OCI-LY7 (cell line): ENCODE measurements at regions of chr14 and their contacts with region 1.

Region 1: GRCh38 chr14:30214461-30215090 is 286.9 kb upstream of the PRKD1 start:
- DNase-seq: peak; percentile 47
- H3K4me3 ChIP-seq: no peak overlapping the region
- H3K27ac ChIP-seq: no peak overlapping the region
- H3K4me1 ChIP-seq: no peaks in the 10 kb centered on the region
- CTCF ChIP-seq: peak; percentile 82

Region 2: GRCh38 chr14:28751467-28752058 is 1463.0 kb before region 1 on chr14:
- CTCF ChIA-PET with region 1: no interaction called
- POLR2A ChIA-PET with region 1: no interaction called
- intact Hi-C with region 1: loop called (anchors 5 kb)
- DNase-seq: peak; percentile 31
- H3K4me3 ChIP-seq: no peak overlapping the region
- H3K27ac ChIP-seq: no peak overlapping the region
- H3K4me1 ChIP-seq: no peaks in the 10 kb centered on the region
- CTCF ChIP-seq: peak; percentile 74

Region 3: DNA sequence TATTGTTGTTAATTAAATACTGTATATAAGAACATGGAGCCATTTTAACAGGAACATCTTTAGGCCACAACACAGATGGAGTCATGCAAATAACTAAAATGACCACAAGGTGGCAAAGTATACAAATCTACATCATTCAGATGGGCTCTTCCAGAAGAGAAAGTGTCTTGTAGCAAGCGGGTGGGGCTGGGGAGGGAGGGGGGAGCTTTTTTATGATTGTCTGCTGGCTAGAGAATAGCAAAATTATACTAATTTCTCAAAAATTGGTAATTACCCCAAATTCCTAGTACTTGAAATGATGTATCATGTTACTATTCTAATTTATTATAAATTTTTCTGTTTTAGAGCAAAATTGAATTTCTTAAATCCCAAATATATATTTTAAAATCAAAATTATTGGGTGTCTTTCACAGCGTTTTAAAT is 665.6 kb before region 1 on chr14:
- CTCF ChIA-PET with region 1: no interaction called
- POLR2A ChIA-PET with region 1: no interaction called
- intact Hi-C with region 1: loop called (anchors 1 kb)
- DNase-seq: peak; percentile 44
- H3K4me3 ChIP-seq: no peak overlapping the region
- H3K27ac ChIP-seq: no peak overlapping the region
- H3K4me1 ChIP-seq: no peaks in the 10 kb centered on the region
- CTCF ChIP-seq: peak; percentile 74